Caco-2 (cell line): ENCODE measurements at regions of chr1 and their contacts with region 1.

Region 1: DNA sequence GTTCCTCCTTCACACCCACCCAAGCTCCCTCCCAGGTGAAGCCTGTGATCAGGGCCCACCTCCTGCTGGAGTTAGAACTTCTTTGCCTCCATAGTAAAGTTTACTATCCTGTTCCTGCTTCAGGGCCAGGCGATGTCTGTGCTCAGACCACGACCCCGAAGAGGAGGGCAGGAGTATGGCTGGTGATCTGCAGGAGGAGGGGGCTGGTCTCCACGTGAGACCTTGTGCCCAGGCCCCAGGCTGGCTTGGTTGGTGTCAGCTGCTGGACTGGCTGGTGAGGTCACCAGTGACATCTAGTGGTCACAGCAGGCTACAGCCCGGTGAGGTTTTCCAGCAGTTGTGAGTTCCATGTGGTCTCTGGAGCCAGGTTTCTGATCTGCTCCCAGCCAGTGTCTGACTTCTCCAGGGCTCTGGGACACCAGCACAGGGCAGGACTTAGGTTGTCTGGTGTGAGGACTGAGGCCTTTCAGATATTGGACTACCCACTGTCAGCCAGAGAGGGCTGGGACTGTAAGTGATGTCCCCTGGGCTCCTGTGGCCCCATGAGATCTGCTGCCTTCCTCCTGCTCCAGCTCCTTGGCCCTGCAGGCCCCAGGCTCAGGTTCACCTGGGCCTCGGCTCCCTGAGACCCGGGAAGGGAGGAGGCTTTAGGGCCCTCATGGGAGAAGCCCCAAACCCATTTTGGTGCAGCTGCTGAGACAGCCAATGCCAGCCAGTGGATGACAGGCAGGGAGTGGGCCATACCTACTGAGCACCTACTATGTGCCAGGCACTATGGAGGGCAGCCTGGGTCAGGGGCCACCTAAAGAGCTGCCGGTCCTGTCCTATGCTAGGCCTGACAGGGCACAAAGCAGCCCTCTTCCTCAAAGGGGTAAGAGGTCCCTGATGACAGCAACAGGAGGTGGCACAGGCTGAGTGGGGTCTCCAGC is 6.0 kb upstream of the UBL4B start:
- DNase-seq: peak; percentile 68 to 70
- H3K4me3 ChIP-seq: no peak overlapping the region
- H3K4me3 Mint-ChIP-seq: no peak overlapping the region
- H3K27ac Mint-ChIP-seq: no peak overlapping the region
- H3K4me1 ChIP-seq: no peaks in the 10 kb centered on the region
- H3K4me1 Mint-ChIP-seq: no peaks in the 10 kb centered on the region
- H3K27me3 ChIP-seq: no peaks in the 10 kb centered on the region
- H3K27me3 Mint-ChIP-seq: peaks cover 8% of the 10 kb centered on the region
- CTCF ChIP-seq: peak; percentile 70 to 81

Region 2: DNA sequence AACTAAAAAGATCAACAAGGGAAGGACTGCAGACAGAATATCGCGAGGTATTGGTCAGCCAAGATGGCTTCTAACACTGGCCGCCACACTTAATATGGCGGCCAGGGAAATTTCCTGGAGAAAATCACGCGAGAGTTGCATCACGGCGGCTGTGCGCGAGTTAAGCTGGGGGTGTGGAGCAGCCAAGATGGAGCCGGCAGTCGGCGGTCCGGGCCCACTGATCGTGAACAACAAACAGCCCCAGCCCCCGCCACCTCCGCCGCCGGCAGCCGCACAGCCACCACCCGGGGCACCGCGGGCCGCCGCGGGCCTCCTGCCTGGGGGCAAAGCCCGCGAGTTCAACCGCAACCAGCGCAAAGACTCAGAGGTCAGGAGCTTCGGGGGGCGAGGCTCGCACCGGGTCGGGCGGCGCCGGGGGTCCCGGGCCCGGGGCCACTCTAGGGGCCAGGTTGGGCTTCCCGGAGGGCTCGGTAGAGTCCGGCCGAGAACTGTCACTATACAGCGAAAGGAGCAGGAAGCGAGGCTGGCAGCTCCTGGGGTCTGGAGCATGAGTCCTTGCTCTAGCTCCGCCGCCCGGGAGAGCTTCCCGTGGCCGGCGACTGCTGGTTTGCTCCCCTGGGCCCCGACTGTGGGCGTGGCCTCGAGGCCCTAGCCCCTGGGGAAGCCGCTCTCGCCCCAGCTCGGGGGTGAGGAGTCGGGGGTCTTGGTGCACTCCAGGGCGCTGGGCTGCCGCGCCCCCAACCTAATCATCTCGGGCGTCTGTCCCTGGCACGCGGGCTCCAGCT is 71.6 kb before region 1 on chr1 and contains the start of gene STRIP1:
- CTCF ChIA-PET with region 1: interaction called, 6 read pairs
- POLR2A ChIA-PET with region 1: no interaction called
- intact Hi-C with region 1: loop called (anchors 1 kb)
- DNase-seq: peak; percentile 88 to 92
- H3K4me3 ChIP-seq: peak within 1 kb of the TSS; percentile 55
- H3K4me3 Mint-ChIP-seq: peak within 1 kb of the TSS; percentile 91
- H3K27ac Mint-ChIP-seq: peak within 1 kb of the TSS; percentile 90
- H3K4me1 ChIP-seq: no peaks in the 10 kb centered on the region
- H3K4me1 Mint-ChIP-seq: peaks cover 7% of the 10 kb centered on the region
- H3K27me3 ChIP-seq: no peaks in the 10 kb centered on the region
- H3K27me3 Mint-ChIP-seq: no peaks in the 10 kb centered on the region
- CTCF ChIP-seq: no peak
- total RNA-seq, gene STRIP1: 32.8 and 36.1 TPM in 2 replicates

Region 3: DNA sequence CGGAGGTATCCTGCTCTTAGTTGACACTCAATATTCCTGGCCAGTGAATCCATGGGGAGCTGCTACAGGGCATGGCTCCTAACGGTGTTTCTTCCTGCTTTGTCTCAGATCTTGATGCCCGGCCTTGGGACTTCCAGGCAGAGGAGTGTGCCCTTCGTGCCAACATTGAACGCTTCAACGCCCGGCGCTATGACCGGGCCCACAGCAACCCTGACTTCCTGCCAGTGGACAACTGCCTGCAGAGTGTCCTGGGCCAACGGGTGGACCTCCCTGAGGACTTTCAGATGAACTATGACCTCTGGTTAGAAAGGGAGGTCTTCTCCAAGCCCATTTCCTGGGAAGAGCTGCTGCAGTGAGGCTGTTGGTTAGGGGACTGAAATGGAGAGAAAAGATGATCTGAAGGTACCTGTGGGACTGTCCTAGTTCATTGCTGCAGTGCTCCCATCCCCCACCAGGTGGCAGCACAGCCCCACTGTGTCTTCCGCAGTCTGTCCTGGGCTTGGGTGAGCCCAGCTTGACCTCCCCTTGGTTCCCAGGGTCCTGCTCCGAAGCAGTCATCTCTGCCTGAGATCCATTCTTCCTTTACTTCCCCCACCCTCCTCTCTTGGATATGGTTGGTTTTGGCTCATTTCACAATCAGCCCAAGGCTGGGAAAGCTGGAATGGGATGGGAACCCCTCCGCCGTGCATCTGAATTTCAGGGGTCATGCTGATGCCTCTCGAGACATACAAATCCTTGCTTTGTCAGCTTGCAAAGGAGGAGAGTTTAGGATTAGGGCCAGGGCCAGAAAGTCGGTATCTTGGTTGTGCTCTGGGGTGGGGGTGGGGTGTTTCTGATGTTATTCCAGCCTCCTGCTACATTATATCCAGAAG is 52.5 kb before region 1 on chr1:
- CTCF ChIA-PET with region 1: interaction called, 4 read pairs
- POLR2A ChIA-PET with region 1: no interaction called
- intact Hi-C with region 1: loop called (anchors 1 kb)
- DNase-seq: peak; percentile 51 to 77
- H3K4me3 ChIP-seq: no peak overlapping the region
- H3K4me3 Mint-ChIP-seq: no peak overlapping the region
- H3K27ac Mint-ChIP-seq: peak overlapping the region; percentile 50
- H3K4me1 ChIP-seq: peaks cover 4% of the 10 kb centered on the region
- H3K4me1 Mint-ChIP-seq: peaks cover 2% of the 10 kb centered on the region
- H3K27me3 ChIP-seq: no peaks in the 10 kb centered on the region
- H3K27me3 Mint-ChIP-seq: no peaks in the 10 kb centered on the region
- CTCF ChIP-seq: peak; percentile 79 to 81